ENCODE measurements at regions of chr6 and their contacts with region 1.

Region 1: GRCh38 chr6:56594699-56595098 is 48.0 kb downstream of the DST start:
- DNase-seq: no peak
- H3K4me3 Mint-ChIP-seq: no peak overlapping the region
- H3K27ac Mint-ChIP-seq: no peak overlapping the region
- H3K4me1 Mint-ChIP-seq: peaks cover 29% of the 10 kb centered on the region
- H3K27me3 Mint-ChIP-seq: no peaks in the 10 kb centered on the region

Region 2: DNA sequence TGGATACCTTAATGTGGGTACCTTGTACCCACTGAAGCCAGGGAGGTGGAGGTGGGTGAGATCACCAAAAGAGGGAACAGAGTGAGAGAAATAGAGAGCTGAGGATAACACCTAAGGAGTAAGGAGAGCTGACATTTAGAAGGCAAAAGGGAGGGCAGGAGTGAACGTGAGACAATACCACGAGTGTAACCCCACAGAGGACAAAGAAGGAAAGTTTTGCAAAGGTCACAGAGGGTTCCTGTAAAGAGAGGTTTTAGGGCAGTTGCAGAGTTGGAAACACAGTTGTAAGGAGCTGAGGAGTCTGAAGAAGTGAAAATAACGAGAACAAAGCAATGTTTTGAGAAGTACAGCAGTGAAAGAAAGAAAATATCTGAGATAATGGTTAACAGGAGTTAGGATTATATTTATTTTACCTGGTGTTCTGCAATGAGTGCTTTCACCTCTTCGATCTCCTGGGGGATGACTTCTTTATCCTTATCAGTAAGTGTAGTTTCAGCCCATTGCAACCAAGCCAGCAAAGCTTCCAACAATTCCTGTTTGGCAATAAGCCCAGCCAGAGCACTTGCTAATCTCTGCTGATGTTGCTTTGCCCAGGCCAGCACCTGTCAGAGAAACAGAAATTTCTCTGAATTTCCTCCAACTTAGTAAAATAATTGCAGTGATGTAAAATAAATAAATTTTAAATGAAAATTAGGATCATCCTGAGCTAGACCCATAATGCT is 118.8 kb before region 1 on chr6:
- CTCF ChIA-PET with region 1: no interaction called
- POLR2A ChIA-PET with region 1: no interaction called
- DNase-seq: no peak
- H3K4me3 Mint-ChIP-seq: no peak overlapping the region
- H3K27ac Mint-ChIP-seq: no peak overlapping the region
- H3K4me1 Mint-ChIP-seq: no peaks in the 10 kb centered on the region
- H3K27me3 Mint-ChIP-seq: no peaks in the 10 kb centered on the region

Region 3: GRCh38 chr6:56624046-56624727 is 29.5 kb after region 1 on chr6:
- CTCF ChIA-PET with region 1: no interaction called
- POLR2A ChIA-PET with region 1: interaction called, 10 read pairs
- DNase-seq: no peak
- H3K4me3 Mint-ChIP-seq: no peak overlapping the region
- H3K27ac Mint-ChIP-seq: no peak overlapping the region
- H3K4me1 Mint-ChIP-seq: no peaks in the 10 kb centered on the region
- H3K27me3 Mint-ChIP-seq: no peaks in the 10 kb centered on the region

Region 4: DNA sequence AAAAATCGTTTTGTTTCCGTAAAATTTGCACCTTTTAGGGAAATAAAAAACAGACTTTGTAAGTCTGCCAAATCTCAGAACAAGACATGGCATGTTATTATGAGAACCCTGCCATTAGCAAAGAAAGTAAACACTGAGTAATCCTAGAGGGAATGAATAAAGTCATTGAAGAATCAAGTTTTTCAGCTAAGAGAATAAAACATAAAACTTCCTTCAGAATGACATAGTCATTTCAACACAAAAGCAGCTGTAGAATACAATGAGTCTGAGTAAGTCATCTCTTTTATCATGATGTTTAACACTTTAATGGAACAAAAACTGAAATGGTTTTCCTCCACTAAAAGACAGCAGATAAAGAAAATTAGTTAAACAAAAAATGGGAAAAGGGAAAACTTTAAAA is 58.3 kb after region 1 on chr6:
- CTCF ChIA-PET with region 1: no interaction called
- POLR2A ChIA-PET with region 1: no interaction called
- DNase-seq: no peak
- H3K4me3 Mint-ChIP-seq: no peak overlapping the region
- H3K27ac Mint-ChIP-seq: no peak overlapping the region
- H3K4me1 Mint-ChIP-seq: no peaks in the 10 kb centered on the region
- H3K27me3 Mint-ChIP-seq: peaks cover 2% of the 10 kb centered on the region

Measured in activated CD4-positive, alpha-beta T cell treated with anti-CD3 and anti-CD28 coated beads, Interleukin-2, amount 10 ng/mL, durations not matched to agents 7 days and 5 days (primary cell).